Activated B cell treated with CpG ODN at 0.5 μM for 24 hours (primary cell): ENCODE measurements at regions of chr22 and their contacts with region 1.

Region 1: DNA sequence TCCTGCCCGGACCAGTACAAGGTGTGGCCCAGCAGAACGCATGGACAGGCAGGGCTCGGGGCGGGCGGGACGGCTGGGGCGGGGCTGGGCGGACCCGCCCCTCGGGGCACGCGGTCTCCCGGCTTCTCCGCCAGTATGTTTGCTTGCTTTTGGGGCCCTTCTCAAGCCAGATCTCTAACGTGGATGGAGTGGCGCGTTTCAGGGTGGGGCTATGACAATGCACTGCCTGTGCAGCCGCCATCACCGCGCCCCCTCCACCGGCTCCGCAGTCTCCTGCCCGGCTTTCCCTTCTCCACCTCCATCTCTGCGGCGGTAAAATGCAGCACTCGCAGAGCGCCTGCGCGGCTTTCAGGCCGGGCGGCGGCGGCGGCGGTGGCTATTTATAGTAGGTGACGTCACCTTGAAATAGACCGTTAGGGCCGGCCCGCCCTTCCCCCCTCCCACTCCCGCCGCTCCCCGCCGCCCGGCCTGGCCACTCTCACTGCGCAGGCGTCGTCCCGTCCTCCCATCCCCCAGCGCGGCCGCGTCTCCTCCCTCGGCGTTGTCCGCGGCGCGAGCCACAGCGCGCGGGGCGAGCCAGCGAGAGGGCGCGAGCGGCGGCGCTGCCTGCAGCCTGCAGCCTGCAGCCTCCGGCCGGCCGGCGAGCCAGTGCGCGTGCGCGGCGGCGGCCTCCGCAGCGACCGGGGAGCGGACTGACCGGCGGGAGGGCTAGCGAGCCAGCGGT is at the start of gene YWHAH:
- DNase-seq: peak; percentile 91
- ATAC-seq: peak; percentile 78
- H3K4me3 Mint-ChIP-seq: peak within 1 kb of the TSS; percentile 91
- H3K27ac Mint-ChIP-seq: peak within 1 kb of the TSS; percentile 91
- H3K4me1 Mint-ChIP-seq: peaks cover 16% of the 10 kb centered on the region
- H3K27me3 Mint-ChIP-seq: no peaks in the 10 kb centered on the region
- CTCF ChIP-seq: no peak
- total RNA-seq, gene YWHAH: 44.3 and 48.9 TPM in 2 replicates

Region 2: GRCh38 chr22:31496007-31496734 is 448.0 kb before region 1 on chr22 and contains the start of gene SFI1:
- CTCF ChIA-PET with region 1: no interaction called
- POLR2A ChIA-PET with region 1: interaction called, 3 read pairs
- intact Hi-C with region 1: loop called (anchors 10 kb)
- DNase-seq: peak; percentile 96
- ATAC-seq: peak; percentile 83
- H3K4me3 Mint-ChIP-seq: peak within 1 kb of the TSS; percentile 95
- H3K27ac Mint-ChIP-seq: peak within 1 kb of the TSS; percentile 97
- H3K4me1 Mint-ChIP-seq: peaks cover 42% of the 10 kb centered on the region
- H3K27me3 Mint-ChIP-seq: no peaks in the 10 kb centered on the region
- CTCF ChIP-seq: no peak
- total RNA-seq, gene SFI1: 110 and 126 TPM in 2 replicates

Region 3: GRCh38 chr22:31661851-31662656 is 282.1 kb before region 1 on chr22 and contains the start of gene PISD:
- CTCF ChIA-PET with region 1: interaction called, 28 read pairs
- POLR2A ChIA-PET with region 1: interaction called, 5 read pairs
- intact Hi-C with region 1: loop called (anchors 1 kb)
- DNase-seq: peak; percentile 96
- ATAC-seq: peak; percentile 96
- H3K4me3 Mint-ChIP-seq: peak within 1 kb of the TSS; percentile 96
- H3K27ac Mint-ChIP-seq: peak within 1 kb of the TSS; percentile 91
- H3K4me1 Mint-ChIP-seq: peaks cover 32% of the 10 kb centered on the region
- H3K27me3 Mint-ChIP-seq: no peaks in the 10 kb centered on the region
- CTCF ChIP-seq: no peak
- total RNA-seq, gene PISD: 53.7 and 61.6 TPM in 2 replicates

Region 4: GRCh38 chr22:31790240-31790639 is 153.9 kb before region 1 on chr22:
- CTCF ChIA-PET with region 1: no interaction called
- POLR2A ChIA-PET with region 1: no interaction called
- intact Hi-C with region 1: loop called (anchors 10 kb)
- DNase-seq: no peak
- ATAC-seq: peak; percentile 82
- H3K4me3 Mint-ChIP-seq: peak overlapping the region; percentile 25
- H3K27ac Mint-ChIP-seq: peak overlapping the region; percentile 82
- H3K4me1 Mint-ChIP-seq: peaks cover 36% of the 10 kb centered on the region
- H3K27me3 Mint-ChIP-seq: no peaks in the 10 kb centered on the region
- CTCF ChIP-seq: no peak

Region 5: DNA sequence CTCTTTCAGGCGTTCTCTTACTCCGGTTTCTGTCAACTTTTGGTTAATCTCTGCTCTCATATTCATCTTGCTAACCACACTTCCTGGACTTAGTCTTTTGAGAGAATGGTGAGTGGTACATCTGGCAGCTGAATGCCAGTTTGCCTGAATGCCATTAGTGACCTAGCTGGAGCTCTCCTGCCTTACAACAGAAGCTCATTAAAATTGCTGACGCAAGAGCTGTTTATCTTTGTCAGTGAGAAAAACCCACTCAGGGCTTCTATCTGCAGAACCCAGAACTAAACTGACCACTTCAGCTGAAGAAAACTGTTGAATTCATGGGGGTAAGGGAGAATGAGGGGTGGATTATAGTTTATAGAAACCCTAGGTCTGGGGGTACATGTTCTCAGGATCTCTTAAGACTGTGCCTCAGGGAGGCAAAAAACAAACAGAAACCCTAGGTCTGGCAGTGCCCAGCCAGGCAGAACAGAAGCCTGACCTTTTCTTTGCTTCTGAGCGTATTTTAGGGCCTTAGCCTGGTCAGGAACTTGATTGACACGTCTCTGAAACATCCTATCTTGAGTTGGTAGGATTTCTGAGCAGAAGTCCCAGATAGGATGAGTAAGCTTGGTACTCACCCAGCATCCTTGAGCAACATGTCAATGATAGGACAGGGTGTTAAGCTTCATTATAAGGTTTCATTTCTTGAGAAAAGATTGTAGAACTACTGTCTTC is 52.6 kb before region 1 on chr22:
- CTCF ChIA-PET with region 1: no interaction called
- POLR2A ChIA-PET with region 1: no interaction called
- intact Hi-C with region 1: no loop called
- DNase-seq: no peak
- ATAC-seq: no peak
- H3K4me3 Mint-ChIP-seq: no peak overlapping the region
- H3K27ac Mint-ChIP-seq: no peak overlapping the region
- H3K4me1 Mint-ChIP-seq: no peaks in the 10 kb centered on the region
- H3K27me3 Mint-ChIP-seq: no peaks in the 10 kb centered on the region
- CTCF ChIP-seq: no peak

Region 6: DNA sequence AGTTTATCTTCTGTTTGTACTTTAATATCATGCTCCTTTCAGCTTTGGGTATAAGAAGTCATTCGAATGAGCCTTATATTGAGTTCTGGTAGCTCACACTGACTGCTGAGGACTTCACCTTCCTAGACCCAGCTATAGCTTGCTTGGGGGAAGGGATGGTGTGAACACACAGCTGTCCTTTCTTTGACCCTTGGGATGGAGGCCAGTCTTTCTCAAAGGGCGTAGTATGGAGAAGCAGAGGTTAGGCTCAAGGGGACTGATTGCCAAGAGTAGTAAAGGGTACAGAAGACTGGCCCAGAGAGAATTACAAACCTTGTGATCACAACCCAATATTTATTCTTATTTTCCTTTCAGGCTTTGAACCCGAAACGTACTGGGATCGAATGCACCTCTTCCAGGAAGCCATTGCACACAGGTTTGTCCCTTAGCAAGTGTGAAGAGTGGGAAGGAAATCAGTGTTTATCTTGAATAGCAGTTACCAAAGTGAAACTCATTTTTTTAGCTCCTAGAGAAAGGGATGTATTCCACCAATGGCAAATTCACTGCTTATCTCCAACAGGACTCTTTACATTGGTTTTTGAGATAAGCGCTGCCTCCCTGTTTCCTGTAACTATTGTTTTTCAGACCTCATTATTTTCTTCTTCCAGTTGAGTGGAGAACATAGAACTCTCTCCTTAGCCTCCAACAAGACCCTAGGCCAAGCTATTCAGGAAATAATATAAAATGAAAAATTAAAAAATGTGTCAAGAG is 42.6 kb before region 1 on chr22:
- CTCF ChIA-PET with region 1: no interaction called
- POLR2A ChIA-PET with region 1: no interaction called
- intact Hi-C with region 1: loop called (anchors 5 kb)
- DNase-seq: no peak
- ATAC-seq: no peak
- H3K4me3 Mint-ChIP-seq: no peak overlapping the region
- H3K27ac Mint-ChIP-seq: no peak overlapping the region
- H3K4me1 Mint-ChIP-seq: no peaks in the 10 kb centered on the region
- H3K27me3 Mint-ChIP-seq: no peaks in the 10 kb centered on the region
- CTCF ChIP-seq: no peak